ENCODE measurements at regions of chr1 and their contacts with region 1.

Region 1: GRCh38 chr1:185646202-185646683 is 87.9 kb upstream of the HMCN1 start:
- DNase-seq: no peak
- ATAC-seq: no peak
- H3K4me3 ChIP-seq: no peak overlapping the region
- H3K4me3 Mint-ChIP-seq: peak overlapping the region in 8 of 10 donors; percentile 11 to 62 (median 46)
- H3K27ac ChIP-seq: no peak overlapping the region
- H3K27ac Mint-ChIP-seq: peak overlapping the region in 7 of 9 donors; percentile 48 to 97 (median 85)
- H3K4me1 ChIP-seq: peaks cover 3 to 19% of the 10 kb centered on the region in 2 donors
- H3K4me1 Mint-ChIP-seq: peaks cover 17 to 53% (median 41%) of the 10 kb centered on the region in 7 donors
- H3K27me3 ChIP-seq: no peaks in the 10 kb centered on the region
- H3K27me3 Mint-ChIP-seq: no peaks in the 10 kb centered on the region

Region 2: GRCh38 chr1:185627761-185628501 is 18.3 kb before region 1 on chr1:
- CTCF ChIA-PET with region 1: no interaction called
- POLR2A ChIA-PET with region 1: no interaction called
- intact Hi-C with region 1: loop called in 1 of 2 experiments (anchors 2 kb)
- DNase-seq: no peak
- ATAC-seq: no peak
- H3K4me3 ChIP-seq: no peak overlapping the region
- H3K4me3 Mint-ChIP-seq: no peak overlapping the region
- H3K27ac ChIP-seq: no peak overlapping the region
- H3K27ac Mint-ChIP-seq: no peak overlapping the region
- H3K4me1 ChIP-seq: no peaks in the 10 kb centered on the region
- H3K4me1 Mint-ChIP-seq: peaks cover 0 to 7% (median 0%) of the 10 kb centered on the region in 7 donors
- H3K27me3 ChIP-seq: no peaks in the 10 kb centered on the region
- H3K27me3 Mint-ChIP-seq: no peaks in the 10 kb centered on the region

Region 3: DNA sequence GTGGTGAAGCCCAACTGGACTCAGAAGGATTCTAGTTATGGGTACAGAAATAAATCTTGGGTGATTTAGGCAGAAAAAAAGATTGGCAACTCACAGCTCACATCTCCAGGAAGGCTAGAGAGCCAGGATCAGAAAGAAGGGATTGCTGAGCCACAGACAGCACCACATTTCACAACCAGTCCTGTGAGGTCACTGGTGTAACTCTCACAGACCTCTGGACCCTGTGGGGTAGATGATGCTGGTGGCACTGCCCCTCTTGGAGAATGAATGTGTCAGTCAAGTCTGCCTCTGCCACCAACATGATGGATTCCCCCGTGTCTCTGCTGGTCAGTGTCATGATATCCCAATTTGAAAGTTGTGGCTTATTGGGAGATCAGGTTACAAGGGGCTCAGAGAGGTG is 17.1 kb after region 1 on chr1:
- CTCF ChIA-PET with region 1: no interaction called
- POLR2A ChIA-PET with region 1: no interaction called
- intact Hi-C with region 1: loop called in 1 of 2 experiments (anchors 2 kb)
- DNase-seq: no peak
- ATAC-seq: no peak
- H3K4me3 ChIP-seq: no peak overlapping the region
- H3K4me3 Mint-ChIP-seq: no peak overlapping the region
- H3K27ac ChIP-seq: no peak overlapping the region
- H3K27ac Mint-ChIP-seq: no peak overlapping the region
- H3K4me1 ChIP-seq: no peaks in the 10 kb centered on the region
- H3K4me1 Mint-ChIP-seq: peaks cover 0 to 12% (median 0%) of the 10 kb centered on the region in 7 donors
- H3K27me3 ChIP-seq: no peaks in the 10 kb centered on the region
- H3K27me3 Mint-ChIP-seq: no peaks in the 10 kb centered on the region